ENCODE measurements at regions of chr2 and their contacts with region 1.

Region 1: GRCh38 chr2:226799181-226799975 is at the start of gene IRS1:
- DNase-seq: peak; percentile 82
- total RNA-seq, gene IRS1: 14.0 TPM

Region 2: GRCh38 chr2:225668606-225669266 is 1130.6 kb before region 1 on chr2:
- intact Hi-C with region 1: loop called (anchors 2 kb)
- DNase-seq: no peak

Region 3: DNA sequence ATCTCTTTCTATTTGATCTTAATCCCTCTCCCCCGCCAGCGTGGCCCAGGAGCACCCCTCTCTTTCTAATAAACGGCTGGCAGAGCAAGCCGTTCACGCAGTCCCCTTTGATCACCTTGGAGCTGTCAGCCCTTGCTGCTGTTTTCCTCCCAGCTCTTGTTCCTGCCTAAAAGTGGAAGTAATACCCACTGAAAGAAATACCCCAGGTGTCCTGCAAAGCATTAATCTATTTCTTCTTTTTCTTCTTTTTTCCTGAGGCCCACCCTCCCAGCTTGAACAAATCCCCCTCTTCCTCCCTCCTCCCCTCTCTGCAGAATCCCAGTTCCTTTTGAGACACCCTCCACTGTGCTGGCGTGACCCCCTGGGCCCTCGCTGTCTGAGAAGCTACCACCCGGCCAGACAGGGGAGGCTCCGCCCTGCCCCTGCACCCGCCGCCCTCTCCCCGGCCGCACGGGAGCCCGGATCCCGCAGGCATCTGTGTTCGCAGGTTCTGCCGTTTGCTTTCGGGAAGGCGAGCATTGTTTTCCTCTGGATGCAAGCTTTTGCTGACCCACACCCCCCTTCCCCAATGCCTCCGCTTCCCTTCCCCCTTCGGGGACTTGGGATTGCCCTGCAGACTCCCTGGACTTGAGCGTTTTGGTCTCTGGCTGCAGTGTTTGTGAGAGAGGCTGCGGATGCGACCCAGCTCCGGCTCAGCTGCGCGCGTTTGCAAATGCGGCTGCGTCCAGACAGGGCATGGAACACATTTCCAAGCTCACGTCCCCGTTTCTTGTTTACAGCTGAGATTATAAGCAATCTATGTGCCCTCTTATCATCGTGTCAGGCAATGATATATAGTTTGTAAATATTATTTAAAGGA is 768.4 kb before region 1 on chr2:
- intact Hi-C with region 1: loop called (anchors 5 kb)
- DNase-seq: peak; percentile 83

Region 4: GRCh38 chr2:226447338-226448295 is 351.8 kb before region 1 on chr2:
- intact Hi-C with region 1: loop called (anchors 2 kb)
- DNase-seq: no peak

Region 5: DNA sequence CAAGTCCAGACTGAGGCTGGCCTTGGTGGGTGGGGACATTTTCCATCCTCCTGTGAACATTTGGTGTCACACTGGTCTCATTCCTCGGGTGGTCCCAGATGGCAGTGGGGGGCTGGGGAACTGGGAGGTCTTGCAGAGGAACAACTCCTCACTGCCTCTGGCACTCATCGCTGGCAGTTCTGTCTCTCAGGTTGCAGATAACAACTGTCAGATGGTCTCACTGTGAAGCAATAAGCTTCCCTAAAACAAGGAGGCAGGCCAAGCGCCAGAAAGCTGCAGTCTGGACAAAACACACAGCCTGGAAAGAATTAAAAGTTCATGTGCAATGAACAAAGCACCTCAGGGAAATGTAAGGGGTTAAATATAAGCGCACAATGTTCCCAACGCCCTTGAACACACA is 77.8 kb before region 1 on chr2:
- intact Hi-C with region 1: loop called (anchors 5 kb)
- DNase-seq: no peak

Region 6: DNA sequence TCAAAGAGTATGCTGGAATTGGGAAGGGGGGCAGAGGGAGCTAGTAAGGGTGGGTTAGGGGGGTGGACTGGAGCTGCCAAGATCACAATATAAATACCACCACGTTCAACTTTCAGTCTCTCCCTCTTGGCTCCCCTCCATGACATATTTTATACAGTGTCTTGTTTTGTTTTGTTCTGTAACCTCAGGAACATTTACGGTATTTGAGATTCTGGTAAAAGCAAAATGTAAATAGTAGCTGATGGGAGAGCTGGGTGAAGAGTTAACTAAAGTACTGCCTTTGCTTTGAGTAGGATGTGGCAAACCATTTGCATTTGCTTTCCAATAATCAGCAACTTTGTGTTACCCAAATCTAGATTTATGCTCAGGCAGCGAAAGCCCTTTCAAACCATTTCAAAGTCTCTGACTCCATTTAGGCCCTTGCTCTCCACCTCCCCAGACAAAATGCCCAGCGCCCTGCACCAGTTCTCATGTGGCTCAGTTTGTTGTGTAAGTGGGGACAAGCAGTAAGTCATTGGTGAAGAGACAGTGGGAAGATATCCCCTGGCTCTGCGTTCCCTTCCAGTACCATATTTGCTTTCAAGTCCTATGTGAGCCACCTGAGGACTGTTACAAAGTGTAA is 17.2 kb before region 1 on chr2:
- intact Hi-C with region 1: no loop called
- DNase-seq: no peak